Posterior vena cava (tissue), 2 donors: ENCODE measurements at regions of chr11 and their contacts with region 1.

Region 1: GRCh38 chr11:113162592-113162962 is 151.8 kb upstream of the TTC12 start:
- DNase-seq: no peak

Region 2: DNA sequence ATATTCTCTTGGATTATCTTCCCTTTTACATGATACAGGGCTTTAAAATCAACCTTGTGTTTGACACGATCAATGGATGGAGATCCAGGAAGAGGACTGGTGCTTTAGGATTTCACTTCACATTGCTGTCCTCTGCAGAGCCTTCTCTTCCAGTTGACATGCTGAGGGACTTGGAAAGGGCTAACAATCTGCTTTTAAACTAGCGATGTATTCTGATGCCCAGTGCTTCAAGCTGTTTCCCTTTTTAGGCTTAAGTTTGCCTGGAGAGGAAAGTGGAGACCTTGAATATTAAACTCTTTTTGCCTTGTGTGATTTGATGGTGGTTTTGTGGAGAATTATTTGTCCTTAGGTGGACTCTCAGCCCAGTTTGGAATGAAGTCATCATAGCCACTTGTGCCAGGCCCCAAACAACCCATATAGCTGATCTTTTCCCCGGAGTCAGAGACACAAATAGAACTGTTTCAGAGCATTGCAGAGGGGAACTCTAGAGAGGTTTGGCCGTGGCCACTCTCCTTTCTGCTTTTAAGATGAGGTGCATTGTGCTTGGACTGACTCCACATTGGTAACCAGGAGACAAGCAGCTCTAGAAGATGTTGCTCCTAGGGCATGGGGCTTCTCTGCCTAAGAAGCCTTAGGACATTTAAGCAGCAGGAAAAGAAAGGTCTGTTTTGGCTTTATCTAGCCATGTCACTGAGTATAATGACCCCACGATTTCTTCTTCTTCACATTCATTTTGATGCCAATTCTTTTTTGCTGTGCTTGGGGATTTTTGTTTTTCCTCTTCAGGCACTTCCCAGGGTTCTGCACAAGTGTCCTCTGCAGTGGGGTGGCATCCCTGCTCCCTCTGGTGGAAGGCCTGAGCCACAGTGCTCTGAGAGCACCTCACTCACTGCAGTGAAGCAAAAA is 48.5 kb before region 1 on chr11:
- intact Hi-C with region 1: no loop called
- DNase-seq: peak; percentile 80

Region 3: DNA sequence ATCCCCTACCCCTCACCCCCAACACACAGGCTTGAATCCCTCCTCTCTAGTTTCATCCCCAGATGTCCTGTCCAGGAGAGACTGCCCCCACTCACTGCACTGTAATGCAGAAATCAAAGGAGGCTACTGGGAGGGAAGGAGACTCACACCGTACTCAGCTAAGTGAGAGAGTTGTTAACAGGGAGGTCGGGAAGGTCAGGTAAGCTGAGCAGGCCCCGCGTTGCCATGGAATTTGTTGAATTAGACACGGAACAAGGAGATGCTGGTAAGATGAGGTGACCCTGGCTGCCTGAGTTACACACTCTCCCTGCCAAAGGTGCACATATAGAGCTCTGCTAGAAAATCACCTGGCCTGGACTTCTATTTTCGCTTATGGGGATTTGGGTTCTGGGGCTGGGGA is 1713.7 kb after region 1 on chr11:
- intact Hi-C with region 1: loop called in 1 of 2 experiments (anchors 10 kb)
- DNase-seq: no peak